ENCODE measurements at regions of chr11 and their contacts with region 1.

Region 1: DNA sequence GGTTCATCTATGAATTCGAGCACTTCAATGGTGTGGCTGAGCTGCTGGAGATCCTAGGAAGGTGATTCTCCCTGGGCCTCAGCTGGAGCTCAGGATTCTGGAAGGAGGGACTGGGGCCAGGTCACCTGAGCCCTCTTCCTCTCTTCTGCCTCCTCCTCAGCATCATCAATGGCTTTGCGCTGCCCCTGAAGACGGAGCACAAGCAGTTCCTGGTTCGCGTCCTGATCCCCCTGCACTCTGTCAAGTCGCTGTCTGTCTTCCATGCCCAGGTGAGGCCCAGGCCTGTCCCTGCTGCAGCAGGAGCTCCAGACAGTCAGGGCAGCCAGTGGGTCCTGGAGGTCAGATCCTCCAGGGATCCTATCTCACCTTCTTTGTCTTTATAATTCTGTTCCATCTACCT is 5.4 kb downstream of the GPHA2 start:
- DNase-seq: no peak
- H3K4me3 ChIP-seq: no peak overlapping the region
- H3K27ac ChIP-seq: no peak overlapping the region
- H3K27me3 ChIP-seq: no peaks in the 10 kb centered on the region
- CTCF ChIP-seq: no peak

Region 2: DNA sequence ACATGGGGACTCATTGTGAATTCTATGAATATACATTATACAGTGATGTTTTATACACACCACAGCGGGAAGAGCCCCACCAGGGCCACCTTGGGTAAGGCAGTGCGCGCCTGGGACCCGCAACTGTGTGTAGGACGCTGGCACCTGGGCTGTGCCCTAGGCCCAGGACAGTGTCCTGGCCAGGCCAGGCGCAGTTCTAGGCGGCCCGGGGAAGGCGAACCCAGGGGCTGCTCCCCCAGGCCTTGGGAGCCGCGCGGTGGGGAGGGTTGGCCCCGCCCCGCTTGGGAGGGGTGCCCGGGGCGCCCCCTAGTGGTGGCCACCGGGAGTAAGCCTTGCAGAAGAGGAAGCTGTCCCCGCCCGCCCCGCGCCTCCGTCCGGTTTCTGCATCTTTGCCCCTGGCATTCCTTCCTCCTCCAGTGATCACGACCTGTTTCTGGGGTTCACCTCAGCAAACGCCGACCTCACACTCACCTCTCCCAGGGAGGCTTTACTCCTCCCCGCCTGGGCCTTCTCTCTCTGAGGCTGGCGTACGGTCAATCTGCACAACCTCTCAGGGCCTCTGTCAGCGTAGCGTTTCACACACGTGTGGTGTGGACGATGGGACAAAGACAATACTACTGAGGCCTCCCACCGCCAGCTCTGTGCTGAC is 42.4 kb before region 1 on chr11:
- CTCF ChIA-PET with region 1: interaction called, 17 read pairs
- POLR2A ChIA-PET with region 1: no interaction called
- DNase-seq: no peak
- H3K4me3 ChIP-seq: no peak overlapping the region
- H3K27ac ChIP-seq: no peak overlapping the region
- H3K27me3 ChIP-seq: no peaks in the 10 kb centered on the region
- CTCF ChIP-seq: peak; percentile 81

Measured in AG04450 (cell line).